ENCODE measurements at regions of chr19 and their contacts with region 1.

Region 1: DNA sequence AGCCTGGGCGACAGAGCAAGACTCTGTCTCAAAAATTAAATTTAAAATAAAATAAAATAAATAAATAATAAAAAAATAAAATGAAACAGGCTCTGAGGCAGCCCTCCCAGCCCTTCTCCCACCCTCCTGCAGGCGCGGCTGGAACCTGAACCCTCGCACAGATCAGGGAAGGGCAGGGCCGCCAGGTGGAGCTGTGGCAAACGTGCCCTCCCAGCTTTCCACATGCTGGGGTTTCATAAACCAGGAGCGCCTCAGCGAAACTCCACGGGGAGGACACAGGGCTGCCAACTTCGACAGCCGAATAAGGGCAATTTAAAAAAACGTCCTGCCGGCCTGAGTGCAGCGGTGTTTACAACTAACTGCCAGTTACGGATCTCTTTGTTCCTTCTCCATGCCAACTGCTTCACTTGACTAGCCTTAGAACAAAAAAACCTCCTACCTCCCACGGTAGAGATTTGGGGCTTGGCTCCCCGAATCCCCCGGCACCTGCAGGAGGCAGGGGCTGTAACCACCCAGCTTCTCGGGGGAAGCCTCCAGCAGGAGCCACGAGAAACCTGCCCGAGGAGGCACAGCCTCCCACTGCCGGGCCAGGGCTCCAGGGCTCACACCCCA is 15.9 kb downstream of the ZNF787 start:
- DNase-seq: peak; percentile 61 to 89
- H3K4me3 ChIP-seq: no peak overlapping the region
- H3K27ac ChIP-seq: no peak overlapping the region
- H3K4me1 ChIP-seq: peaks cover 0 to 23% (median 14%) of the 10 kb centered on the region in 4 experiments; a peak in 6 of 7 replicates
- H3K27me3 ChIP-seq: no peaks in the 10 kb centered on the region; a peak in 1 of 7 replicates
- CTCF ChIP-seq: peak; percentile 81 to 91 (median 91)
- EP300 ChIP-seq: no peak
- POLR2A ChIP-seq: no peak
- RAD21 ChIP-seq: peak; percentile 69 to 73

Region 2: GRCh38 chr19:56090931-56091490 is 14.2 kb before region 1 on chr19:
- CTCF ChIA-PET with region 1: interaction called, 10 read pairs
- POLR2A ChIA-PET with region 1: interaction called, 3 read pairs
- DNase-seq: no peak
- H3K4me3 ChIP-seq: no peak overlapping the region
- H3K27ac ChIP-seq: no peak overlapping the region
- H3K4me1 ChIP-seq: peaks cover 0 to 5% (median 0%) of the 10 kb centered on the region in 4 experiments; a peak in 1 of 7 replicates
- H3K27me3 ChIP-seq: no peaks in the 10 kb centered on the region
- CTCF ChIP-seq: no peak
- EP300 ChIP-seq: no peak
- POLR2A ChIP-seq: no peak
- RAD21 ChIP-seq: no peak

Region 3: GRCh38 chr19:56121180-56122167 is 16.3 kb after region 1 on chr19 and contains the start of gene ZNF787:
- CTCF ChIA-PET with region 1: interaction called, 5 read pairs
- POLR2A ChIA-PET with region 1: interaction called, 51 read pairs
- DNase-seq: peak; percentile 97 to 99
- H3K4me3 ChIP-seq: peak within 1 kb of the TSS; percentile 75 to 91 (median 77)
- H3K27ac ChIP-seq: peak within 1 kb of the TSS; percentile 85
- H3K4me1 ChIP-seq: peaks cover 0 to 16% (median 12%) of the 10 kb centered on the region in 4 experiments; a peak in 6 of 7 replicates
- H3K27me3 ChIP-seq: no peaks in the 10 kb centered on the region; a peak in 1 of 7 replicates
- CTCF ChIP-seq: no peak
- EP300 ChIP-seq: no peak
- POLR2A ChIP-seq: peak; percentile 45 to 46; a peak in 2 of 3 replicates
- RAD21 ChIP-seq: no peak
- total RNA-seq, gene ZNF787: 56.0 and 57.3 TPM in 2 replicates

Region 4: DNA sequence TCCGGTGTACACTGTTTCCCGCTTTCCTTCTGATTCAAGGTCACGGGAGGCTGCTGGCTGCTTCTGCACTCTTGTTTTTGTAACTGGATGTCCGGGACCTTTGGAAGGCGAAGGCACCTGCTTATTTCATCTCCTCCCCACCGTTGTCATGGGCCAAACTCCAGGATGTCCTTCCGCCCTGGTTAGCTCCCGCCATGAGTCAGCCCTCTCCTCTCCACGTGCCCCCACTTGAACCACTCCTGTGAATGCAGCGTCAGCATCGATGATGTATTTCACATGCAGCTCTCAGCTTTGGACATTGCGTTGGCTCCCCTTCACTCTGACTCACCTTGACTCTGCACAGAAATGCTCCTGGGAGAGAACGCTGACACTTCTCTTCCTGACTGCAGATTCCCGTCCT is 65.1 kb after region 1 on chr19:
- CTCF ChIA-PET with region 1: interaction called, 10 read pairs
- POLR2A ChIA-PET with region 1: interaction called, 4 read pairs
- DNase-seq: no peak
- H3K4me3 ChIP-seq: no peak overlapping the region
- H3K27ac ChIP-seq: no peak overlapping the region
- H3K4me1 ChIP-seq: no peaks in the 10 kb centered on the region
- H3K27me3 ChIP-seq: no peaks in the 10 kb centered on the region
- CTCF ChIP-seq: no peak
- EP300 ChIP-seq: no peak
- POLR2A ChIP-seq: no peak
- RAD21 ChIP-seq: no peak

Measured in H1 (cell line).